ENCODE measurements at regions of chr4 and their contacts with region 1.

Region 1: DNA sequence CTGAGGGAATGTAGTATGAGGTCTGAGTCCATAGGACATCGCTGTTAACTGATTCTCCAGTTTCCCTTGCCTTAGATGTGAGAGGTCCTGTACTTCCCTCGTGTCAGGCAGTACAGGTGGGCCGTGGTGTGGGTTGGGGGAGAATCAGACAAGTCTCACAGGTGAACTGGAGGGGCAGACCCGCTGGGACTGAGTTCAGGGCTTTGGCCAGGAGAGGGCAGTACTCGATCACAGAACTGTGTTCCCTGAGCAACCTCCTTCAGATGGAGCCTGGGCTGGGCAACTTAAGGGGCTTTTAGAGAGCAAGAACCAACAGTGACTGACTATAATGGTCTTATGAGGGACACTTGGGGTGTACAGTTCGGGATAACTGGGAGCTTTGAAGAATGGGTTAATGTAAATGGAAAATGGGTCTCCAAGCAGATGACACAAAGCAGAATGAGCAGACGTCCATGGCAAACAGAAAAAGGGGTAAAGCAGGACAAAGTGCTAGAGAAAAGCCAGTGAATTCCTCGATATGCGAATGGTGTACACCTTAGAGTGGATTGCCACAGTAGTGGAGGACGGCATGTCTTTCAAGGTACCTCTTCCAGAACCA is 83.6 kb downstream of the CCNG2 start:
- DNase-seq: peak; percentile 70
- H3K27ac ChIP-seq: no peak overlapping the region
- CTCF ChIP-seq: peak; percentile 76

Region 2: DNA sequence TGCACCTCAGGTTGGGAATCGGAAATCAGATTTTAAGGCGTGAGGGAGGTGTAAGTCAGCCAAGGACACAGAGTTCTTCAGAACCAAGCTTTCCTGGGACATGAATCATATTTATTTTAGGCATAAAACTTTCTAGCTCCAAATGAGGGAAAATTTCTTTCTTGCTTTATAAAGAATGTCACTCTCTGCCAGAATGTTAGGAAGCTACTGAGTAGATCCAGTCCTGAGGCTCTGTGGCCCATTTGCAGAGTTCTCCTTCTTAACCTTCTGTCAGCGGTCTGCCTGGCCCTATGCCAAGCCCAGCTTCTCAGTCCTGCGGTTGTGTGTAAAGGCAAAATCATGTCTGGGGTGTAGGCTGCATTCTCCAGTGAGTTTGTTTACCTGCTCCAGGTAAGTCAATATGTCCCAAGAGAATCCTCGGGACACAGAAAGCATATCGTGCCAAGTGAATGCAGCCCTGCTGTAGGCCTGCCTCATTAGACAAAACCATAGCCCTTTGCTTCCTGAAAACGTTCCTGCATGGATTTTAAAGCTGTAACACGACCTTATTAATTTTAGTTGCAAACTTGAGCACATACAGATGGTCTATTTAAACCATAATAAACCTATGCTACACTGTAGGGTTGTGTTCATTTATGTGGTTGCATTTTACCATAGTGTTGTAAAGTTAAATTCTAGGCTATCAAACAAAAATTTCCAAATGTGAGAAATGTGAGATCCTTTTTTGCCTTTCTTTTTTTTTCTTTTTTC is 135.6 kb before region 1 on chr4:
- CTCF ChIA-PET with region 1: no interaction called
- POLR2A ChIA-PET with region 1: no interaction called
- DNase-seq: peak; percentile 22
- H3K27ac ChIP-seq: peak overlapping the region; percentile 44; the same call in 1 of the 2 replicates
- CTCF ChIP-seq: no peak

Region 3: GRCh38 chr4:77172336-77172735 is 68.2 kb before region 1 on chr4:
- CTCF ChIA-PET with region 1: no interaction called
- POLR2A ChIA-PET with region 1: no interaction called
- DNase-seq: peak; percentile 67
- H3K27ac ChIP-seq: no peak overlapping the region
- CTCF ChIP-seq: no peak

Region 4: GRCh38 chr4:77305766-77306165 is 65.2 kb after region 1 on chr4:
- CTCF ChIA-PET with region 1: interaction called, 12 read pairs
- POLR2A ChIA-PET with region 1: no interaction called
- DNase-seq: no peak
- H3K27ac ChIP-seq: no peak overlapping the region
- CTCF ChIP-seq: no peak

Region 5: GRCh38 chr4:77358315-77358928 is 117.9 kb after region 1 on chr4:
- CTCF ChIA-PET with region 1: interaction called, 32 read pairs
- POLR2A ChIA-PET with region 1: no interaction called
- DNase-seq: peak; percentile 60
- H3K27ac ChIP-seq: no peak overlapping the region
- CTCF ChIP-seq: peak; percentile 57